Heart right ventricle (tissue), 16 donors: ENCODE measurements at regions of chr4 and their contacts with region 1.

Region 1: GRCh38 chr4:78775303-78776030 is 683 bp upstream of the BMP2K start:
- DNase-seq: peak; percentile 88 to 90
- ATAC-seq: peak; percentile 91 to 94 (median 93)
- H3K4me3 ChIP-seq: peak overlapping the region; percentile 70 to 94 (median 86)
- H3K27ac ChIP-seq: peak overlapping the region; percentile 94 to 100 (median 99)
- H3K4me1 ChIP-seq: peaks cover 0 to 46% (median 35%) of the 10 kb centered on the region in 9 donors
- H3K27me3 ChIP-seq: no peaks in the 10 kb centered on the region
- CTCF ChIP-seq: no peak

Region 2: GRCh38 chr4:78512357-78512920 is 263.0 kb before region 1 on chr4:
- intact Hi-C with region 1: no loop called
- DNase-seq: no peak
- ATAC-seq: peak in 4 of 8 donors; percentile 38 to 58 (median 42)
- H3K4me3 ChIP-seq: no peak overlapping the region
- H3K27ac ChIP-seq: no peak overlapping the region
- H3K4me1 ChIP-seq: no peaks in the 10 kb centered on the region
- H3K27me3 ChIP-seq: no peaks in the 10 kb centered on the region
- CTCF ChIP-seq: no peak

Region 3: GRCh38 chr4:78612398-78613178 is 162.9 kb before region 1 on chr4:
- intact Hi-C with region 1: loop called in 5 of 10 experiments (anchors 5 to 10 kb)
- DNase-seq: peak in 1 of 2 donors; percentile 34
- ATAC-seq: peak; percentile 26 to 83 (median 68)
- H3K4me3 ChIP-seq: no peak overlapping the region
- H3K27ac ChIP-seq: no peak overlapping the region
- H3K4me1 ChIP-seq: peaks cover 0 to 37% (median 13%) of the 10 kb centered on the region in 9 donors
- H3K27me3 ChIP-seq: no peaks in the 10 kb centered on the region
- CTCF ChIP-seq: peak; percentile 32 to 78 (median 66)

Region 4: DNA sequence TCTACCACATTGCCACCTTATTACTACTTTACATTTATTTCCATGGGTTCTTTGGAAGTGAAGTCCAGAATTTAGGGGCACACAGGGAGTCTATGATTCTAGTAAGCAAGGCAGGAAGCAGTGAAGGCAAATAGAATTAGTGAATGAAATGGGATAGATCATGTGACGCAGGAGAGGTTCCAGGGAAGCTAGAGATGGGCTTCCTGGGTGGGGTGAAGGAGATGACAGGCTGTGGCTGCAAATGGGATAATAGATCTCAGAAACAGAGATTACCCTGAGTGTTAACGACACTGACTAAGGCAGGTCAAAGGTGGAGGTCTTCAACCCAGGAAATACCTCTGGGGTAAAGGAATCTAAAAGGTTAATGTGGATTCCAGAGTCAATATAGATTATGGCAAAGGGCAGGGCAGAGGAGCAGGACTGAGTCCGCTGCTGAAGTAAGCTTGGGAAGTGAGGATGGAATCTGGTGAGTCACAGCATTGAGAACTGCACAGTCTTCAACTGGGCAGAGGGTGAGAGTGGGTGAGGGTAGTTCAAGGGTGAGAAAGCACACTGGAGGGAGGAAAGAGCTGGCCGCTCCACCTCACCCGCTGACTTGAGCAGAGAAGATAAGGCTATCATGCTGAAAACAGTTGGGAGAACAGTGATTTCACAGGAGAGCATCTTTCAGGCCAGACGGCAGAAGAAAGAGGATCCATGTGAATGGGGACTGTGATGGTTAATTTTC is 153.1 kb before region 1 on chr4:
- intact Hi-C with region 1: loop called in 5 of 10 experiments (anchors 10 kb)
- DNase-seq: no peak
- ATAC-seq: peak in 1 of 8 donors; percentile 70
- H3K4me3 ChIP-seq: no peak overlapping the region
- H3K27ac ChIP-seq: no peak overlapping the region
- H3K4me1 ChIP-seq: no peaks in the 10 kb centered on the region
- H3K27me3 ChIP-seq: no peaks in the 10 kb centered on the region
- CTCF ChIP-seq: no peak

Region 5: DNA sequence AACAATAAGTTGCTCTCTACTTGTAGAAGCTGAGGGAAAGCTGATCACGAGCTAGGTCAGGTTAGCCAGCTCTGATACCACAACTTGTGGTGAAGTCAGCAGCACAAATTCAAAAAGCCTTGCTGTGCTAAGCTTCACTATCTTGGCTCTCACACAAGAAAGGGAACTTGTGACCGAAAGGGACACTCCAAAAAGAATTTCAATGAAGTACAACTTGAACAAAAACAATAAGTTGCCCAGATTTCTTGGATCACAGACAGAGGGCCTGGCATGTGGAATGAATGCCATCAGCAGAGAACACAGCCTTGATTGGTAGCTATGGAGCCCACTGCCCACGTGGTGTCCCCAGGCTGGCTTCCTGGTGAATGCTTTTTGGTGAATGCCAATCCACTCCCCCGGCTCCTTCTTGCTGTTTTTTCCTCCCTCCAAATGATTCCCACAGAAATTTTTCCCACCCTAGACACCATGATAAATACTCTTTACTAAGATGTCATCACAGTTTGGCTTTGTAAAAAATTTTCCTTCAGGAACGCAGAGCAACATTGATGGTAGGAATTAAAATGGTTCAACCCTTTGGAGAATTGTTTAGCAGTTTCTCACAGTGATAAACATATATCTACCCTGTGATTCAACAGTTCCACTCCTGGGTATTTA is 141.3 kb before region 1 on chr4:
- intact Hi-C with region 1: loop called in 2 of 10 experiments (anchors 5 to 10 kb)
- DNase-seq: peak in 1 of 2 donors; percentile 43
- ATAC-seq: peak; percentile 46 to 91 (median 72)
- H3K4me3 ChIP-seq: no peak overlapping the region
- H3K27ac ChIP-seq: peak overlapping the region in 9 of 10 donors; percentile 4 to 65 (median 40)
- H3K4me1 ChIP-seq: peaks cover 0 to 41% (median 18%) of the 10 kb centered on the region in 9 donors
- H3K27me3 ChIP-seq: no peaks in the 10 kb centered on the region
- CTCF ChIP-seq: no peak

Region 6: DNA sequence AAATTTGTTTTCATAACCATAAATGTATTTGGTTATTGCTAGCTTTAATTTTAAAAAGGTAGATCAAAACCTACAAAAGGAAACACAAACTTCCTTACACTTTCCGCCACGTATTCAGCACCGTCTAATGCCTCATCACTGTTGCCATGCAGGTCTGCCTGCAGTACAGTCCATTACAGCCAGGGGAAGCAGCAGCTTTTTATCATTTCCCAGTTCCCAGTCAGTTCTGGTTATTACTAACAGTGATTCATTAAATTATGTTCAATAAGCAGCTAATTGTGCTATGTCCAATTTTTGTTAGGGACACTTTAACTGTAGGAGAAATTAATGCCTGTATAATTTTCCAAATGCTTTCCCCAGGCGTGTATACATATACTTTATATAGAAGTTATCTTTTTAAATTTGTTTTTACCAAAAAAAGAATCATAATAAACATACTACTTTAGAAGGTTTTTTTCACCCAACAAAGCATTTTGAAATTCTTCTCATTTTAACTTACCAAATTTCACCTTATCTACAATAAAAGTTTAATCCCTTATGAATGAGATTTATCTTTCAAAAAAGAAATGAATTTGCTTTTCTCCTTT is 130.6 kb before region 1 on chr4:
- intact Hi-C with region 1: loop called in 8 of 10 experiments (anchors 5 to 10 kb)
- DNase-seq: peak; percentile 24 to 74
- ATAC-seq: peak; percentile 81 to 96 (median 90)
- H3K4me3 ChIP-seq: no peak overlapping the region
- H3K27ac ChIP-seq: peak overlapping the region in 7 of 10 donors; percentile 68 to 90 (median 73)
- H3K4me1 ChIP-seq: peaks cover 0 to 48% (median 26%) of the 10 kb centered on the region in 9 donors
- H3K27me3 ChIP-seq: no peaks in the 10 kb centered on the region
- CTCF ChIP-seq: peak; percentile 80 to 98 (median 93)

Region 7: DNA sequence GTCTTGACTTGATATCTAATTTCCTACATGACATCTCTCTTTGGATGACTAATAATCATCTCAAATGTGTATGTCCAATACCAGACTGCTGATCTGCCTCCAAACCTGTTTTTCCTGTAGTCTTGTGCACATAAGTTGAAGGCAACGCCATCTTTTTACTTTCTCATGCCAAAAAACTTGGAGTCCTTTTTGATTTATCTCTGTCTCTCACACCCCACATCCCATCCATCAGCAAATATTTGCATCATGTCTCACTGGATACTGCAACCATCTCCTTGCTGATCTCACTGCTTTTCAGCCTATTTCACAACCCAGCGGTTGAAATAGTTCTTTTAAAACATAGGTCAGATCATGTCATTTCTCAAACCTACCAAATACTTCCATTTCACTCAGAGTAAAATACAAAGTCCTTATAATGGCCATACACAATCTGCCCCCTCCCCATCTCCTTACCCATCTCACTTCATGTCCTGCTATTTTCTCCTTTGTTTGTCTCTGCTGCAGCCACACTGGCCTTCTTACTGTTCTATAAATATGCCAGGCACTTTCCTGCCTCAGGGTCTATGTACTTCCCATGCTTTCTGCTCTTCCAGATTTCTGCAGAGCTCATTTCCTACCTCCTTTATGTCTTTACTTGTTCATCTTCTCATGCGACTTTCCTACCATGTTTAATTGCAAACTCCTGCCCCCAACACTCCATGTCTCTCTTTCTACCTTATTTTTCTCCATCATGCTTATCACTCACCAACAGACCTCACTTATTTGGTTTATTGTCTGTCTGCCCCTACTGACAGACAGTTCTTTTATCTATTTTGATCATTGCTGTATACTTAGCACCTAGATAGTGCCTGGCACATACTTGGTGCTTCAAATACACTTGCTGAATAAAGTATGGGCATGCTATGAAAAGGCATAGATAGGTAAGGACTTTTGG is 125.1 kb before region 1 on chr4:
- intact Hi-C with region 1: loop called in 6 of 10 experiments (anchors 5 to 10 kb)
- DNase-seq: no peak
- ATAC-seq: no peak
- H3K4me3 ChIP-seq: no peak overlapping the region
- H3K27ac ChIP-seq: peak overlapping the region in 1 of 10 donors; percentile 69
- H3K4me1 ChIP-seq: peaks cover 0 to 80% (median 28%) of the 10 kb centered on the region in 9 donors
- H3K27me3 ChIP-seq: no peaks in the 10 kb centered on the region
- CTCF ChIP-seq: no peak

Region 8: GRCh38 chr4:78864405-78865024 is 89.0 kb after region 1 on chr4:
- intact Hi-C with region 1: loop called in 8 of 10 experiments (anchors 5 to 10 kb)
- DNase-seq: peak in 1 of 2 donors; percentile 54
- ATAC-seq: peak in 6 of 8 donors; percentile 47 to 68 (median 61)
- H3K4me3 ChIP-seq: no peak overlapping the region
- H3K27ac ChIP-seq: no peak overlapping the region
- H3K4me1 ChIP-seq: peaks cover 0 to 6% (median 0%) of the 10 kb centered on the region in 9 donors
- H3K27me3 ChIP-seq: no peaks in the 10 kb centered on the region
- CTCF ChIP-seq: peak; percentile 46 to 93 (median 85)